A673 (cell line): ENCODE measurements at regions of chr13 and their contacts with region 1.

Region 1: DNA sequence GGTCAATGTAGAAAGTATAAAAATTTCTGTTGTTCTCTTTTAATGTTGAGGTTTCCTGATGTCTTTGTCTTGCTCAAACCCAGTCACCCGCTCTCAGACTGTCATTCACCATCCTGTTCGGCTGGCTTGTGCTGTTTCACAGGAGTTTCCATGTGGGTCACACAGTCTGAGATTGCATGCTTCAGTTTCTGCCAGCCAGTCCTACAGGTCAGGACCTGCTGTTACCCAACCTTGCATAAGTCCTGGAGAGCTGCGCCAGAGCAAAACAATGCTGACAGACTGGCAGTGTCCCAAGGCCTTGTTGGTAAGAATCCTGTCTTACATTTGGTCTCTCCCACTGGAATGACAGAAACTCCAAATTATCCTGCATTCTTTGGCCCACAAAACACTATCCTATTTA is 340.0 kb upstream of the SLITRK5 start:
- DNase-seq: no peak
- H3K4me3 ChIP-seq: no peak overlapping the region
- H3K27ac ChIP-seq: no peak overlapping the region
- H3K4me1 ChIP-seq: no peaks in the 10 kb centered on the region
- H3K27me3 ChIP-seq: no peaks in the 10 kb centered on the region
- CTCF ChIP-seq: no peak

Region 2: GRCh38 chr13:86085890-86086289 is 1245.3 kb before region 1 on chr13:
- CTCF ChIA-PET with region 1: interaction called, 11 read pairs
- POLR2A ChIA-PET with region 1: no interaction called
- intact Hi-C with region 1: no loop called
- DNase-seq: peak; percentile 1
- H3K4me3 ChIP-seq: no peak overlapping the region
- H3K27ac ChIP-seq: no peak overlapping the region
- H3K4me1 ChIP-seq: no peaks in the 10 kb centered on the region
- H3K27me3 ChIP-seq: no peaks in the 10 kb centered on the region
- CTCF ChIP-seq: peak; percentile 28; the same call in 1 of the 2 replicates